A673 (cell line): ENCODE measurements at regions of chr3 and their contacts with region 1.

Region 1: GRCh38 chr3:183664913-183665381 is 29.5 kb downstream of the KLHL24 start:
- DNase-seq: no peak
- H3K4me3 ChIP-seq: no peak overlapping the region
- H3K27ac ChIP-seq: no peak overlapping the region
- H3K4me1 ChIP-seq: no peaks in the 10 kb centered on the region
- H3K27me3 ChIP-seq: no peaks in the 10 kb centered on the region
- CTCF ChIP-seq: no peak

Region 2: GRCh38 chr3:183680061-183680460 is 15.1 kb after region 1 on chr3:
- CTCF ChIA-PET with region 1: no interaction called
- POLR2A ChIA-PET with region 1: interaction called, 14 read pairs
- intact Hi-C with region 1: no loop called
- DNase-seq: no peak
- H3K4me3 ChIP-seq: no peak overlapping the region
- H3K27ac ChIP-seq: no peak overlapping the region
- H3K4me1 ChIP-seq: no peaks in the 10 kb centered on the region
- H3K27me3 ChIP-seq: no peaks in the 10 kb centered on the region
- CTCF ChIP-seq: no peak